IMR-90 (cell line): ENCODE measurements at regions of chr19 and their contacts with region 1.

Region 1: DNA sequence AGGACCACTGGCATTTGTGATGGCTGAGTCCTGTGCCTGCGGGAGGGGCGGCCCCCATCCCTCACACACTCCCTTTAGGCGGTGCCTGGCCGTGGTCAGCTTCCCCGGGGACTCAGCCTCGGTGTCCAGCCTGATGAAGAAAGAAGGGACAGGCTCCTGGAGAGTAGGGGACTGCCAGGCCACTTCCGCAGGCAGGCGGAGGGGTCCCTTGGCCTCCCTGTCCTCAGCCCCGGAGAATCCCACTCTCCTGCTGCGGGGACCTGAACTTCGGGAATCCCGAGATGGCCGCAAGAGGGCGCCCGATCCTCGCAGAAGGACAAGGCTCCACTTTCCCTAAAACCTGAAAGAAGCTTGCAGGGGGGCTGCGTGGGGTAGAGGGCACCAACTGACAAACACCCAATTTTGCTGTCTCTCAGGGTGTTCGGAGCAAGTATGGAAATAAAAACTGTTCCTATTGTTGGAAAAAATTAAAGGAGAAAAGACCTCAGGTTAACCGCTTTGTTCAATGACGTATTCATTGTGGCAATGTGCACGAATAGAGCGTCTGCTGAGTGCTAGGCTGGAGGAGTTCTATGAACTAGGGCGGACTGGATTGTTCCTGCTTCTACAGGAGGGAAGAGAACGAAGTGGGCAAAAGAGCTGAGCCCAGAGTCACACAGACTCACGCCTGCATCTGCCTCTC is 297.3 kb downstream of the ZNF536 start:
- DNase-seq: peak; percentile 12
- ATAC-seq: peak; percentile 72
- H3K4me3 ChIP-seq: no peak overlapping the region
- H3K27ac ChIP-seq: no peak overlapping the region
- H3K4me1 ChIP-seq: no peaks in the 10 kb centered on the region
- H3K27me3 ChIP-seq: no peaks in the 10 kb centered on the region; the same call in 1 of the 2 replicates
- CTCF ChIP-seq: peak; percentile 64
- POLR2A ChIP-seq: no peak
- RAD21 ChIP-seq: peak; percentile 57

Region 2: DNA sequence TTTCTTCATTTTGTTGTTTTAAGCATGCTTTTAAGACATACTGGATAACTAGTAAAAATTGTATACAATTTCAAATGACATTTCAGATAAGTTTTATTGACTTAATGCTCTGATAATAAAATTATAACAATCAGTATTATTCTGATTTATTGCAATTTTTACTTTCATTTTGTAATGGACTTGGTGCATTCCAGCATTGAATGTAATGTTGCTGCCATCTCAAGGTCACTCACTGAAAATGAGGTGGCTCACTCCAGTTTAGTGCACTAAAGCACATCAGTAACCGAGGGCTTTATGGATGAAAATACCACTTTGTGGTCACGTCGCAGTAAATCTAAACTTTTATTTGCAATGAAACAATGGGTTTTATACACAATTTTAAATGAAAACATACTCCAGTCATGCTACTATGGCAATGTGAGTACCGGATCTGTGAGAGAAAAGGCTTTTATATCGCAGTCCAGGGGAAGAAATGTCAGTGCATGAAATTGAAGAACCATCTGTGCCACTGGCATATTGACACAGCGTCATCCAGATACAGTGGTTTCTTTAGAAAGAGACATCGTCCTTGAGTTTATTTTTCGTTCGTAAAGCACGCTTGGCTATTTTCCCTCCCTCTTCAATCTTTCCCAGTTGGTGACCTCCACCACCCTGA is 1655.3 kb after region 1 on chr19:
- CTCF ChIA-PET with region 1: no interaction called
- POLR2A ChIA-PET with region 1: no interaction called
- dilution Hi-C with region 1: no loop called
- in situ Hi-C with region 1: no loop called
- intact Hi-C with region 1: loop called (anchors 10 kb)
- DNase-seq: peak; percentile 6
- ATAC-seq: peak; percentile 42; the same call in 1 of the 2 replicates
- H3K4me3 ChIP-seq: no peak overlapping the region
- H3K27ac ChIP-seq: no peak overlapping the region
- H3K4me1 ChIP-seq: no peaks in the 10 kb centered on the region
- H3K27me3 ChIP-seq: peaks cover 2% of the 10 kb centered on the region
- CTCF ChIP-seq: 0 out of 2 replicates have a peak, but pooled peaks have one; percentile 20
- POLR2A ChIP-seq: no peak
- RAD21 ChIP-seq: 0 out of 2 replicates have a peak, but pooled peaks have one; percentile 10